ENCODE measurements at regions of chr5 and their contacts with region 1.

Region 1: DNA sequence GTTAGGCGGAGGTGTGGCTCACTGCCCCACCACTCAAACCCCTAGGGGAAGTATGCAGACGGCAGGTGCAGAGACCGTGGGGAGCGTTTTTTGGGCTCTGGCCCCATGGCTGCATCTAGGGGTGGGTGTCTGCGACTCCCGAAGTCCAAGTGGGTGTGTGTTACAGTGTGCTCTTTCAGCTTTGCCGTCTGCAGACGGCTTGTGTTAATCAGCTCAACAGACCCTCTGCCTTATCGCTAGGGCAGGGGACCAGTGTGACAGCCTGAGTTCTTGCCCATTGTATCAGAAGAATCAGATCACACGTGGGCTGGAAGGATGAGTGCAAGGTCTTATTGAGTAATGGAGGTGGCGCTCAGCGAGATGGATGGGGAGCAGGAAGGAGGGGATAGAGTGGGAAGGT is 162.8 kb downstream of the ENC1 start:
- DNase-seq: no peak
- H3K4me3 ChIP-seq: no peak overlapping the region
- H3K27ac ChIP-seq: no peak overlapping the region
- H3K4me1 ChIP-seq: no peaks in the 10 kb centered on the region
- H3K27me3 ChIP-seq: no peaks in the 10 kb centered on the region
- CTCF ChIP-seq: no peak
- POLR2A ChIP-seq: no peak

Region 2: DNA sequence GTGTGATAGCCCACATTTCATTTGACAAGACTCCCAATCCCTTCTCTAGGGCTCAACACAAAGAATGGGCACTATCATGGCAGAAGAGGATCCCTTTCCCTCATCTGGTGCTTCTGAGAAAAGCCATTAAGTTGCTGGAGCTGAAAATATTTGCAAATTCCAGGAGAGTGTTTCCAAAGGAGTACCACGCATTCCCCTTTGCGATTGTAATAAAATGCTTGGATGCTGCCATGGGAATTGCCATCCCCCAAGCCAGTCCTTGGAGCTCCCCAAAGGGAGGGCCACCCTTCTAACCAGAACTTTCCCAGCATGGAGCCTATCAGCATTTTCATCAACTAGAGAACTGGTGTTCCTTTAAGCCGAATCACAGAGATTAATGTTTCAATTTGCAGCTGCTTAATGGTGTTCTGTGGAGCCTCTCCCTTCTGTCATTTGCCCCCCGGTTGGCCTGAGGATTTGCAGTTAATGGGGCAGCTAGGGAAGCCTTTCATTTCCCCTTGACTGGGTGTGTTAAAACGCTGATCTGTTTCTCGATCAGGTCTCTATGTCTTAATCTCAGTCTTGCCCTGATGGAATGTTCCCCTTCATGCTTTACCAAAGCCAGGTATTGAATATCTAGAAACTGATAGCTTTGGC is 29.7 kb after region 1 on chr5:
- intact Hi-C with region 1: loop called (anchors 2 kb)
- DNase-seq: no peak
- H3K4me3 ChIP-seq: no peak overlapping the region
- H3K27ac ChIP-seq: no peak overlapping the region
- H3K4me1 ChIP-seq: no peaks in the 10 kb centered on the region
- H3K27me3 ChIP-seq: no peaks in the 10 kb centered on the region
- CTCF ChIP-seq: no peak
- POLR2A ChIP-seq: no peak

Region 3: DNA sequence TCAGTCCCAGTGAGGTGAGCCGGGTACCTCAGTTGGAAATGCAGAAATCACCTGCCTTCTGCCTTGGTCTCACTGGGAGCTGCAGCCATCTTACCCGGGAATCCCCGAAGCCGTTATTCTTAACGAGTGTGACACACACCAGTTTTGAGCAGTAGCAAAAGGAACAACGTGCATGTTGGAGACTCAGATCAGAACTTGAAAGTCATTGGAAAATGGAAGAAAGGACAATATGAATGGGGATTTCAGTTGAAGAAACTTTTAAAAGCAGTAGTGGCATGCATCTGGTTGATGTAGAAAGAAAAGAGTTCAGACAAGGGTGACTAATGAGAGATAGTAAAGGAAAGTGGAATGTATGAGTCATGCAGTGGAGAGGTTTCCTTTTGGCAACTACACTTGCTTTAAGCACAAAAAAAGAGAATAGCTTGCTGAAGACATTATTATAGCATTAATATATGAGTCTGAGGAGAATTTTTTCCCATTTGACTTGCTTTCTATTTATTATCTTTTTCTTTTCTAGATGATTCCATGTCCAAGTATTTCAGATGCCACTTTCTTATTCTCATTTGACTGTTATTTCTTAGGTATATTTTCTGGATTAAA is 1089.0 kb after region 1 on chr5:
- intact Hi-C with region 1: no loop called
- DNase-seq: no peak
- H3K4me3 ChIP-seq: no peak overlapping the region
- H3K27ac ChIP-seq: peak overlapping the region; percentile 67 to 69
- H3K4me1 ChIP-seq: peaks cover 0 to 10% of the 10 kb centered on the region in 2 donors
- H3K27me3 ChIP-seq: no peaks in the 10 kb centered on the region
- CTCF ChIP-seq: no peak
- POLR2A ChIP-seq: no peak

Measured in breast epithelium (tissue), 4 donors.